Transverse colon (tissue), 4 donors: ENCODE measurements at regions of chr12 and their contacts with region 1.

Region 1: DNA sequence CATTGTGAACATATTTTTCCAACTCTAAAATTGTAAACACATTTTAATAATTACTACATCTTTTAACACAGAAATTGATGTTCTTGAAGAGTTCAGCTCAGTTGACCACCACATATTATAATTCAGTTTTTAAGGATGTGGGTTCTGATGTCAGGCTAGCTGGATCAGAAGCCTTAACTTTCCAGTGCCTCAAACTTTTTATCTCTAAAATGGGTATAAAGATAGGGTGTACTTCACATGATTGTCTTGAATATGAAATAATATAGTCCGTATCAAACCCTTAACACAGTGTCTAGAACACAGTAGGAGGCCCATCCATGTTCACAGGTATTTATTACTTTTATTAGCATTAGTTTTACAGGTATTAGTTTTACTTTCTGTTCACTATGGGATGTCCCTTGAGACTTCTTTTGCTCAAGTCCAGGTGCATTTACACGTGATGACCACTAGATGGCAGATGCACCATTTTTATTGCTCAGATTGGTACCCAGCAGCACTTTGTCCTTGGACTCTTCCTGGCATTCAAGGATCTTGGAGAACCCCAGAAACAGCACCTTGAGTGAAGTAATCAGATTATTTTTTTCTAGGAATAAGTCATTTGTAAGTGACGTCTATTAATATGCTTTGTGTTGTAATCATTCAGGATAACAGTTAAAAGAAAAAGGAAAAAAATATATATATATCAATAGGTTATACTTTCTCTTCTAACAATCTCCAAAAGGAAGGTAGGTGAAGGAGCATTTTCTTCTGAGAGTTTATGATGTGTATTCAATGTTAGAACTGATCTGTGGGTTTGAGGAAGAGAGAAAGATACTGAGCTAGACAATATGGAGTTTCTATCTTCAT is 580.2 kb downstream of the ETNK1 start:
- DNase-seq: no peak
- H3K4me3 ChIP-seq: no peak overlapping the region
- H3K27ac ChIP-seq: no peak overlapping the region
- H3K4me1 ChIP-seq: no peaks in the 10 kb centered on the region
- H3K27me3 ChIP-seq: no peaks in the 10 kb centered on the region
- CTCF ChIP-seq: peak; percentile 74 to 95 (median 90)
- EP300 ChIP-seq: no peak
- POLR2A ChIP-seq: no peak

Region 2: GRCh38 chr12:23169012-23169695 is 36.0 kb before region 1 on chr12:
- in situ Hi-C with region 1: no loop called
- intact Hi-C with region 1: no loop called
- DNase-seq: no peak
- H3K4me3 ChIP-seq: no peak overlapping the region
- H3K27ac ChIP-seq: no peak overlapping the region
- H3K4me1 ChIP-seq: no peaks in the 10 kb centered on the region
- H3K27me3 ChIP-seq: no peaks in the 10 kb centered on the region
- CTCF ChIP-seq: no peak
- EP300 ChIP-seq: no peak
- POLR2A ChIP-seq: no peak

Region 3: DNA sequence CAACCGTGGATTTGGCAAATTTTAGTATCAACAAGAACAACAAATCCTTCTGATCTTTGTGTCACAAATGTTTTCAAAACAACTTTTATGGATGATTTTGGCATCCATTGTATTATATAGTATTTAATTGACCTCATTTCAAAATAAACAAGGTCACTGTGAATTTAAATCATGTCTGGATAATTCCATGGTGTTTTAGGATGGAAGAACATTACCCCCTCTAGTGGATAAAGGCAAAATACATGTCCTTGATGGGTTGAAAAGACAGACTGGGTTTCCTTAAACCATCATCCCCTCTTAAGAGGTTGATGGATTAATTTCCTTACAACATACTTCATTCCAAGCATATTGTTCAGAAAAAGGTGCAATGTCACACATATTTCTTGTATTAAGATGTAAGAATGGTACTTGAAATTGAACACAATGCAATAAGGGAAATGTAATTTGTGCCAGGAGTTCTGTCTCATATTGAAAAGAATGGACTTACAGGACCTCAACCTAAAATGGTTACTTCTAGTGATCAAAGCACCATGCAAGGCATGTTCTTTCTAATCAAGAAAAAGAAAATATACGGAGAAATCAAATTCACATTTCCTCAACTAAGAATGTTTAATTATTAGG is 1391.7 kb after region 1 on chr12:
- in situ Hi-C with region 1: loop called in 1 of 4 experiments (anchors 25 kb)
- intact Hi-C with region 1: no loop called
- DNase-seq: no peak
- H3K4me3 ChIP-seq: no peak overlapping the region
- H3K27ac ChIP-seq: no peak overlapping the region
- H3K4me1 ChIP-seq: no peaks in the 10 kb centered on the region
- H3K27me3 ChIP-seq: no peaks in the 10 kb centered on the region
- CTCF ChIP-seq: peak; percentile 46 to 62 (median 48)
- EP300 ChIP-seq: no peak
- POLR2A ChIP-seq: no peak

Region 4: DNA sequence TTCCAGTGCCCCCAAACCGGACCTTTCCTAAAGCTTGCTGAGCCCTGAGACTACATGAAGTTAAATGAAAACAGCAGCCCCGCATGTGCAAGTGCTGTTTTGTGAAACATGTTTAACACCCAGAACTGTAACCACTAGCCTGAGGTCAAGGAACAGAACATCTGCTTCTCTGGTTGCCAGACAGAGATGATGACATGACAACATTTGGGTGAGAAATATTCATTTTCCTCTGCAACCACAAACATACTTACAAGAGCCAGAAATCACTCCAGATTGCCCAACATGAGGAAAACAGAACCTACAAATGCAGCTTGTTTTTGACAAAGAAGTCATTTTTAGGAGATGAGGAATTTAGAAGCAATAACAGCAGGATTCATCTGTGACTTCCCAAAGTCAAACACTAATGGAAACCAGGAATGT is 1633.4 kb after region 1 on chr12:
- in situ Hi-C with region 1: loop called in 2 of 4 experiments (anchors 25 kb)
- intact Hi-C with region 1: no loop called
- DNase-seq: peak; percentile 37
- H3K4me3 ChIP-seq: no peak overlapping the region
- H3K27ac ChIP-seq: peak overlapping the region; percentile 46 to 75 (median 54)
- H3K4me1 ChIP-seq: peaks cover 0 to 27% (median 6%) of the 10 kb centered on the region in 4 donors
- H3K27me3 ChIP-seq: no peaks in the 10 kb centered on the region
- CTCF ChIP-seq: no peak
- EP300 ChIP-seq: no peak
- POLR2A ChIP-seq: no peak